ENCODE measurements at regions of chr2 and their contacts with region 1.

Region 1: GRCh38 chr2:12824351-12824777 is 107.6 kb downstream of the TRIB2 start:
- DNase-seq: no peak
- H3K4me3 ChIP-seq: no peak overlapping the region
- H3K27ac ChIP-seq: peak overlapping the region; percentile 46
- H3K4me1 ChIP-seq: peaks cover 28% of the 10 kb centered on the region
- H3K27me3 ChIP-seq: no peaks in the 10 kb centered on the region
- CTCF ChIP-seq: no peak
- POLR2A ChIP-seq: no peak

Region 2: DNA sequence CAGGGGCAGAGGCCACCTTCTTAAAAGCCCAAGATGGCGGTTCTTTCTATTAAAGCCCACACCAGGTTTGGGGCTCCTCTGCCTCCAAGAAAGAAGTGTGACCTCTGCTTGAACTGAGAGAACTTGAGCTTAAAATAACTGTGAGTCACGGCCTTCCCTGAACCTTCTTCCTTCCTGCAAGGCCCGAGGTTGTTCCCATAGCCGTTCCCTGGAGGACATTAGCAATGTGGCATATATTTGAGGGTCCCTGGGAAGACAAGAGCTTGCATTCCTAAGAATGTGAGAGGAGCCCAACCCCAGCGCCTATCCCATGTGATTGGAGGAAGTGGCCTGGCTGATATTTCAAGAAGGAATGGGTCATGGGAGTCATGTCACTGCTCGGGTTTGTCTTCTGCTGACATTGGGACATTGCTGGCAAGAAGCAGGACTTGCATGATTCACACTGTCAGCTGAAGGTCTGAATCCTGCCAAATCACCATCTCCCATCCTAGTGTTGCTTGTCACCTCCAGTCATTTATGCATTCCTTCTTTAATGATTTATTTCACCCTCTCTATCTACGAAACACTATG is 60.4 kb after region 1 on chr2:
- intact Hi-C with region 1: loop called (anchors 10 kb)
- DNase-seq: no peak
- H3K4me3 ChIP-seq: no peak overlapping the region
- H3K27ac ChIP-seq: no peak overlapping the region
- H3K4me1 ChIP-seq: no peaks in the 10 kb centered on the region
- H3K27me3 ChIP-seq: no peaks in the 10 kb centered on the region
- CTCF ChIP-seq: no peak
- POLR2A ChIP-seq: no peak

Region 3: DNA sequence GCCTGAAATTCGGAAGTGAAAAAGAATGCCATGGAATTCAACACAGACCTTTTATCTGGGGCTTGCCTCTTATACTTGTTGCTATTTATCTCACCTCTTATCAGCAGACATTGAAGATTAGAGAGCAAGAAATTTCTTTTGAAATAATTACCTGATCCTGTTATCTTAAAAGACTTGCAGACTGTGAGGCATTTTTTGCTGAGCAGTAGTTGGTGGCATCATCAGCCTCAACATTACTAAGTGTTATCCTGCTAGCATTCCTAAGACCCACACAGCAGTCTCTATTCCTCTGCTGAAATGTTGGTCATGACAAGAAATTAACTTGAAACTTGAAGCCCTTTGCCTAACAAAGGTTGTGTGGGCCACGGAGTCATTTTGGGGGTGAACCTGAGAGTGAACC is 78.9 kb after region 1 on chr2:
- intact Hi-C with region 1: loop called (anchors 5 kb)
- DNase-seq: no peak
- H3K4me3 ChIP-seq: no peak overlapping the region
- H3K27ac ChIP-seq: no peak overlapping the region
- H3K4me1 ChIP-seq: no peaks in the 10 kb centered on the region
- H3K27me3 ChIP-seq: no peaks in the 10 kb centered on the region
- CTCF ChIP-seq: no peak
- POLR2A ChIP-seq: no peak

Region 4: DNA sequence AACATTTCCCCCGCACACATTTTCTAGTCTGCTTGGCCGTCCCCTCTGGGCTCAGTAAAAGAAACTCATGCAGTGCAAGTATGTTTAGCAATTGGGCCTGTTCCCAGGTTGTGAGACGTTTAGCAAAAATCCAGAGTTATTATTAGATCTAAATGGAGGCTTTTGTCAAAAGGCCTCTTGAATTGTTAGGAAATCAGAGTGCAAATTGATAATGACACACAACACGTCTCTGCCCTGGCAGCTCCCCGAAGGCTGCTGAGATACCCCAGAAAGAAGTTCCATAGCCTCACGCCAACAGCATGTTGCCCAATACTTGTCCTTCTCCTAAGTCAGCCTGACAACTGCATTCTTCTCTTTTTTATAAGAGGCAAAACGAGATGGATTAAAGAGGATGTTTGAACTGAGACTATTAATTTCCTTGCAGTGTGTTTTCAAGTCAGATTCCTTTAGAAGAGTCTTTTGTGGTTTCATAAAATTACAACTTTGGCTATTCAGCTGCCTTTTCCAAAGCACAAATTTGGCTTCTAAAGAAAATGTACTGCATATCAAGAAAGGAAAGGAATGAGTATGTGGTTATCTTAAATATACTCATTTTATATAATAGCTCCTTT is 94.6 kb after region 1 on chr2:
- intact Hi-C with region 1: loop called (anchors 5 kb)
- DNase-seq: peak in 1 of 2 donors; percentile 96
- H3K4me3 ChIP-seq: no peak overlapping the region
- H3K27ac ChIP-seq: peak overlapping the region; percentile 34
- H3K4me1 ChIP-seq: peaks cover 7% of the 10 kb centered on the region
- H3K27me3 ChIP-seq: no peaks in the 10 kb centered on the region
- CTCF ChIP-seq: no peak
- POLR2A ChIP-seq: no peak

Measured in vagina (tissue), 2 donors.